PC-9 (cell line): ENCODE measurements at regions of chr6 and their contacts with region 1.

Region 1: GRCh38 chr6:12011276-12012076 is 636 bp upstream of the HIVEP1 start:
- DNase-seq: peak; percentile 95 to 97
- H3K4me3 ChIP-seq: peak overlapping the region; percentile 87; the same call in 1 of the 2 replicates
- H3K27ac ChIP-seq: peak overlapping the region; percentile 96; the same call in 1 of the 2 replicates
- H3K4me1 ChIP-seq: peaks cover 41% of the 10 kb centered on the region
- H3K27me3 ChIP-seq: no peaks in the 10 kb centered on the region
- CTCF ChIP-seq: no peak

Region 2: DNA sequence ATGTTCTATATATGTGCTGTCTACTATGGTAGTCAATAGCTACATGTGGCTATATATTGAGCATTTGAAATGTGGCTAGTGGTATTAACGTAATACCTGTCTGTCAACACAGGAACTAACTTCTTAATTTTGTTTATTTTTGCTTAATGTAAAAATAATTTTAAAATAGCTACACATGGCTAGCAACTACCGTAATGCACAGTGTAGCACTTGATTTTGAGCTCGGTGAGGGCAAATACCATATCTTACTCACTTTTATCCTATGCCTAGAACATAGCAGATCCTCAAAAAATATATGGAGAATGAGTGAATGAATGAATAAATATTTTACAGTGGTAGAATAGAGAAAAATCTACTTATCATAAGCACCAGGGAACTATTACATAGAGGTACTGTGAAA is 502.0 kb before region 1 on chr6:
- CTCF ChIA-PET with region 1: no interaction called
- POLR2A ChIA-PET with region 1: no interaction called
- intact Hi-C with region 1: no loop called
- DNase-seq: no peak
- H3K4me3 ChIP-seq: no peak overlapping the region
- H3K27ac ChIP-seq: no peak overlapping the region
- H3K4me1 ChIP-seq: no peaks in the 10 kb centered on the region
- H3K27me3 ChIP-seq: no peaks in the 10 kb centered on the region
- CTCF ChIP-seq: no peak

Region 3: GRCh38 chr6:11653028-11653583 is 358.4 kb before region 1 on chr6:
- CTCF ChIA-PET with region 1: interaction called, 3 read pairs
- POLR2A ChIA-PET with region 1: no interaction called
- intact Hi-C with region 1: loop called (anchors 1 kb)
- DNase-seq: peak; percentile 55 to 69
- H3K4me3 ChIP-seq: no peak overlapping the region
- H3K27ac ChIP-seq: peak overlapping the region; percentile 15; the same call in 1 of the 2 replicates
- H3K4me1 ChIP-seq: peaks cover 48% of the 10 kb centered on the region
- H3K27me3 ChIP-seq: no peaks in the 10 kb centered on the region
- CTCF ChIP-seq: no peak

Region 4: GRCh38 chr6:11770546-11771466 is 240.7 kb before region 1 on chr6:
- CTCF ChIA-PET with region 1: no interaction called
- POLR2A ChIA-PET with region 1: interaction called, 6 read pairs
- intact Hi-C with region 1: loop called (anchors 1 kb)
- DNase-seq: peak; percentile 81 to 100
- H3K4me3 ChIP-seq: peak overlapping the region; percentile 52
- H3K27ac ChIP-seq: peak overlapping the region; percentile 98
- H3K4me1 ChIP-seq: peaks cover 83% of the 10 kb centered on the region
- H3K27me3 ChIP-seq: no peaks in the 10 kb centered on the region
- CTCF ChIP-seq: no peak

Region 5: GRCh38 chr6:11975353-11975977 is 36.0 kb before region 1 on chr6:
- CTCF ChIA-PET with region 1: no interaction called
- POLR2A ChIA-PET with region 1: interaction called, 19 read pairs
- intact Hi-C with region 1: no loop called
- DNase-seq: no peak
- H3K4me3 ChIP-seq: no peak overlapping the region
- H3K27ac ChIP-seq: no peak overlapping the region
- H3K4me1 ChIP-seq: peaks cover 9% of the 10 kb centered on the region; the same call in 1 of the 2 replicates
- H3K27me3 ChIP-seq: no peaks in the 10 kb centered on the region
- CTCF ChIP-seq: no peak

Region 6: GRCh38 chr6:12075067-12075563 is 63.6 kb after region 1 on chr6:
- CTCF ChIA-PET with region 1: no interaction called
- POLR2A ChIA-PET with region 1: no interaction called
- intact Hi-C with region 1: no loop called
- DNase-seq: no peak
- H3K4me3 ChIP-seq: no peak overlapping the region
- H3K27ac ChIP-seq: no peak overlapping the region
- H3K4me1 ChIP-seq: peaks cover 12% of the 10 kb centered on the region
- H3K27me3 ChIP-seq: no peaks in the 10 kb centered on the region
- CTCF ChIP-seq: peak; percentile 61

Region 7: DNA sequence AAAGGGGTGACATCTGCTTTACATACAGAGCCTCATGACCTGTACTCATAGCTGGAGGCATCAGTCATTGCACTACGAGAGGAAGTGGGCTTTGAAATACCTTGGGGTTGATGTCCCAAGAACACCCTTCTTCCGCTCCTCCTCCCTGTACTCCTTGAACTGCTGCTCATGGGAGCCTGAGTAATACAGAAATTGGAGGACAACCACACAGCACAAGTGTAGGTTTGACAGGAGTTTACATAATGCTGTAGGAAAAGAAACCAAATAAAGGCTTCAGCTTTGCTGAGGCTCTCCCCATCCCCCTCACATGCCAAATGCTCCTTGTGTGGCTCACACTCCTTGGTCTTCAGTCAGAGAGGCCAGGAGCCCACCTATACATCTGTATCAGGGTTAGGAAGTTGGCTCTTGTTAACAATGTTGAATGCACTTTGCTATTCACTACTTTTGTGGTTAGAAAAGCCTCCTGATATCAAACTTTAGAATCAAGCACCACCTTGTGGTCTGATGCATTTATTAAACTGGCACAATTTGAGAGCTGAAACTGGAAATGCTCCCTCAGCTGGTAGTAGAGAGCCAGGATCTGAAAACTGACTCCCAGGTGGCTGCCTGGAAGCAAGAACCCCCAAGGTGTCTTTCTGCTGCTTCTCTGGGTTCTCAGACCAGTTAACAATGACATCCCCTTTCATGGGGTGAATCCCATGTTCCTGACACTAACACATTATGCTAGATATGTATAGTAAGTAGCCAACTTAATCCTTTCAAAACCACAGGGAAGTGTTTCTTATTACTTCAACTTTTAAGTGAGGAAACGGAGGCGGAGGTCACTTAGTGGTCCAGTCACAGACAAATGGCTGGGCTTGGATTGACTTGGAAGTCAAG is 222.5 kb after region 1 on chr6:
- CTCF ChIA-PET with region 1: interaction called, 3 read pairs
- POLR2A ChIA-PET with region 1: interaction called, 3 read pairs
- intact Hi-C with region 1: loop called (anchors 2 kb)
- DNase-seq: peak; percentile 47 to 84
- H3K4me3 ChIP-seq: no peak overlapping the region
- H3K27ac ChIP-seq: no peak overlapping the region
- H3K4me1 ChIP-seq: peaks cover 5% of the 10 kb centered on the region
- H3K27me3 ChIP-seq: no peaks in the 10 kb centered on the region
- CTCF ChIP-seq: peak; percentile 95

Region 8: DNA sequence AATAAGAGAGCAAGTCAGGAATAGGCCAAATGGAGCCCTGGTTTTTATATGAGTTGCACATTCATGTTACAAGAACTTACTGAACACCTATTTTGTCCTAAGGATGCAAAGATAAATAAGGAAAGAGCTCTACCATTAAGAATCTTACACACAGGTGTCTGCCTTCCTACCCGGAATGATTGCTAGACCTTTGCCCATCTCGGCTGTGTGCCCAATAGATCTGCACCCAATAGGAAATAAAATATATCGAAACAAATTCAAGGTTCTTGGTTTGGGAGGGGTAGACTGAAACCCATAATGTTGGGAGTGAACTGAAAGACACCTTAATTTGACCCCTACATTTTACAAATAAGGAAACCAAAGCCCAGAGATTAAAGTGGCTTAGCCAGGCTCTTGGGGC is 327.5 kb after region 1 on chr6:
- CTCF ChIA-PET with region 1: no interaction called
- POLR2A ChIA-PET with region 1: no interaction called
- intact Hi-C with region 1: no loop called
- DNase-seq: no peak
- H3K4me3 ChIP-seq: no peak overlapping the region
- H3K27ac ChIP-seq: no peak overlapping the region
- H3K4me1 ChIP-seq: peaks cover 49% of the 10 kb centered on the region
- H3K27me3 ChIP-seq: no peaks in the 10 kb centered on the region
- CTCF ChIP-seq: no peak